ENCODE measurements at regions of chr19 and their contacts with region 1.

Region 1: DNA sequence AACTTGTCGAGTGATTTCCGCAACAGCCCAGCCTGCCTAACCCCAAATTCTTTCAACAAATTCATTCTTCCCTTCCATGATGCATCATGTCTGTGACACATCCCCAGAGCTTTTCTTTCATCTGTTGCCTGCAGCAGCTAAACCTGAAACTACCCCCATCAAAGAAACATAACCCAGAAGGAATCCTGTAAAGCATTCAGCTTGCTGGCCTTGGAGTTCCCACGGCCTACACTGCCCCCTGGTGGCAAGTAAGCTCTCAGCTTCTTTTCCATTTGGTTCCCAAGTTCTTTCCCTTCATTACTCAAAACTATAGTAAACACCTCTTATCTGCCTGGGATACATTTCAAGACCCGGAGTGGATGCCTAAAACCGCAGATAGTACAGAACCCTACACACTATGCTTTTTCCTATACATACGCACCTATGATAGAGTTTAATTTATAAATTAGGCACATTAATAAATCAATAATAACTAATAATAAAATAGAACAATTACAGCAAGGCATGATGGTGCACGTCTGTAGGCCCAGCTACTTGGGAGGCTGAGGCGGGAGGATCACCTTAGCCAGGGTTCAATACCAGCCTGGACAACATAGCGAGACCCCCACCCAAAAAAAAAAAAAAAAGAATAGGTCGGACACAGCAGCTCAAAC is 7.4 kb downstream of the ETHE1 start:
- DNase-seq: no peak
- H3K4me3 ChIP-seq: no peak overlapping the region
- H3K27ac ChIP-seq: peak overlapping the region in 3 of 4 donors; percentile 70 to 85 (median 70)
- H3K4me1 ChIP-seq: peaks cover 4 to 50% (median 5%) of the 10 kb centered on the region in 3 donors
- H3K27me3 ChIP-seq: no peaks in the 10 kb centered on the region
- CTCF ChIP-seq: peak; percentile 89 to 95 (median 92)
- POLR2A ChIP-seq: no peak

Region 2: GRCh38 chr19:43446746-43447489 is 72.6 kb before region 1 on chr19:
- intact Hi-C with region 1: loop called (anchors 5 kb)
- DNase-seq: no peak
- H3K4me3 ChIP-seq: no peak overlapping the region
- H3K27ac ChIP-seq: no peak overlapping the region
- H3K4me1 ChIP-seq: peaks cover 0 to 23% (median 2%) of the 10 kb centered on the region in 3 donors
- H3K27me3 ChIP-seq: no peaks in the 10 kb centered on the region
- CTCF ChIP-seq: peak; percentile 93 to 98 (median 97)
- POLR2A ChIP-seq: no peak

Region 3: DNA sequence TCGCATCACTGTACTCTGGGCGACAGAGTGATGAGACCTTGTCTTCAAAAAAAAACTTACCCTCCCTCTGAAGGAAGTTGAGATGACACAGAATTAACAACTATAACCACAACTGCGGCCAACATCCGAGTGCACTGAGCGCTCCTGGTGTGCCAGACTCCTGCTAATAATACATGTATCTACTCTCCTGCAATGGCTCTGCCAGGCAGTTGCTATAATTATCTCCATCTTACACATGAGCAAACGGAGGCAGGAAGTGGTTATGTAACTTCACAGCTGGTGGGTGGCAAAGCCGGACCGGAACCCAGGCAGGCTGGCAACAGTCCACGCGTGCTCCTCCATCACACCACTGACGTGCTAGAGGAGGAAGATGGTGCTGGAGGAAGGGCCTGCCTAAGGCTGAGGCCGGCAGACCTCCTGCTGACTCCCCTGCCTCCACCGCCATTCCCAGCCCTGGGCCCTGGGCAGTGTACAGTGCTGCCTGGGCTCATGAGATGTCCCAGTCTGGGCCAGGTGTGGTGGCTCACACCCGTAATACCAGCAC is 43.2 kb after region 1 on chr19:
- intact Hi-C with region 1: no loop called
- DNase-seq: no peak
- H3K4me3 ChIP-seq: no peak overlapping the region
- H3K27ac ChIP-seq: peak overlapping the region; percentile 49 to 82 (median 70)
- H3K4me1 ChIP-seq: peaks cover 5 to 12% (median 5%) of the 10 kb centered on the region in 3 donors
- H3K27me3 ChIP-seq: no peaks in the 10 kb centered on the region
- CTCF ChIP-seq: no peak
- POLR2A ChIP-seq: no peak

Region 4: GRCh38 chr19:43624933-43625332 is 105.4 kb after region 1 on chr19:
- intact Hi-C with region 1: no loop called
- DNase-seq: peak; percentile 10
- H3K4me3 ChIP-seq: no peak overlapping the region
- H3K27ac ChIP-seq: peak overlapping the region in 2 of 4 donors; percentile 34 to 59
- H3K4me1 ChIP-seq: peaks cover 3 to 32% (median 7%) of the 10 kb centered on the region in 3 donors
- H3K27me3 ChIP-seq: no peaks in the 10 kb centered on the region
- CTCF ChIP-seq: peak in 3 of 6 experiments; percentile 29 to 38 (median 31)
- POLR2A ChIP-seq: no peak